ENCODE measurements at regions of chr2 and their contacts with region 1.

Region 1: DNA sequence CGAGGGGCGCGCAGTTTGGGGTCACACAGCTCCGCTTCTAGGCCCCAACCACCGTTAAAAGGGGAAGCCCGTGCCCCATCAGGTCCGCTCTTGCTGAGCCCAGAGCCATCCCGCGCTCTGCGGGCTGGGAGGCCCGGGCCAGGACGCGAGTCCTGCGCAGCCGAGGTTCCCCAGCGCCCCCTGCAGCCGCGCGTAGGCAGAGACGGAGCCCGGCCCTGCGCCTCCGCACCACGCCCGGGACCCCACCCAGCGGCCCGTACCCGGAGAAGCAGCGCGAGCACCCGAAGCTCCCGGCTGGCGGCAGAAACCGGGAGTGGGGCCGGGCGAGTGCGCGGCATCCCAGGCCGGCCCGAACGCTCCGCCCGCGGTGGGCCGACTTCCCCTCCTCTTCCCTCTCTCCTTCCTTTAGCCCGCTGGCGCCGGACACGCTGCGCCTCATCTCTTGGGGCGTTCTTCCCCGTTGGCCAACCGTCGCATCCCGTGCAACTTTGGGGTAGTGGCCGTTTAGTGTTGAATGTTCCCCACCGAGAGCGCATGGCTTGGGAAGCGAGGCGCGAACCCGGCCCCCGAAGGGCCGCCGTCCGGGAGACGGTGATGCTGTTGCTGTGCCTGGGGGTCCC is at the start of gene ITGA4:
- DNase-seq: peak; percentile 83
- CTCF ChIP-seq: peak; percentile 92

Region 2: DNA sequence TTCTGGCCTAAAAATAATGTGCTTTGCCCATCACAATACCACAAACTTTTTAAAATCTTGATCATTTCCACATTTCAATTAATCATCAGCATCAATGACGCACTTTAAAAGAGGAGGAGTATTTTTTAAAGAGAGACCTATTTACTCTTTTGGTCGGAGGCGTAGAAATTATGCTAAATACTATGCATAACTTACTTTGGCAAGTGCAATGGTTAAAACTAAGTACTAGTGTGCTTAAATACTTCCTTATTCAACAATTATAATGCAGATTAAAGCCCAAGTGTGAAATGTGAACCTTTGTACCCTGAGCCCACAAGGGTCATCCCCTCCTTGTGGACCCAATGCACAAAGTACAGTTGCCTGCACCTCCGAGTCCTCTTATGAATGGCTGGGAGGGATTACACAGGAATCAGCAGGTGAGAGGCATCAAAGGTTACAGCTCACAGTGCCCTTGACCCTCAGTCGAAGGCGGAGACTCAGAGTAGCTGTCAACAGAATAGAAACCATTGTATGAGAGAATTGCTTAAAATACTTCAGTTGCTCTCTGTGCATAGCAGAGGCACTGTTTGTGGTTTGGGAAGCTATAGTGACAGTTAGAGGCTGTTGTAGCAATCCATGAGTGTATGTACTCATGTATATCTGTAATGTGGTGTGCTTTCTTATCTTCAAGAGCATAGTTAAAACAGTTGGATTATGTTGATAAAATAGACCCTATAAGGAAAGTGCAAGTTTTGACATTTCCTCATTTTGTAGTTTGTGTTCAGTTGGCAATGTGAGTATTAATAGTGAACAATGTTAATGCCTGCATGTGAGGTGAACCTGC is 151.7 kb before region 1 on chr2:
- CTCF ChIA-PET with region 1: interaction called, 22 read pairs
- POLR2A ChIA-PET with region 1: interaction called, 3 read pairs
- DNase-seq: peak; percentile 45
- CTCF ChIP-seq: no peak

Region 3: DNA sequence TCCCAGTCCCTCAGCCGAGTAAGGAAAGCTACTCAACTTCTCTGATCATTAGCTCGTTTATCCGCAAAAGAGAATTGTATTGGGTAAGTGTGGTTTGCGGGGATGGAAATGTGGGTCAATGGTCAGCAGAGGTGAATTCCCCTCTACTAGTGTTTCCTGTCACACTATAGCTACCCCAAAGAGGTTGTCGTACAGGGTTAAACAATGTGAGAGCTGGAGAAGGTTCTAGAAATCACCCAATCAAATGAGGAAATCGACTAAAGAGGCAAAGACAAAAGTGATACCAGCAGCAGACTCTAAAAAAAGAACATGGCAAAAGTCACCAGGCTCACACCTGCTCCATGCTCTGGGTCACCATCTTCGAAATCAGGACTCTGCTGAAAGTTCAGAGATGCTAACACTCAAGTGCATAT is 144.7 kb before region 1 on chr2:
- CTCF ChIA-PET with region 1: interaction called, 21 read pairs
- POLR2A ChIA-PET with region 1: no interaction called
- DNase-seq: peak; percentile 35
- CTCF ChIP-seq: no peak

Region 4: DNA sequence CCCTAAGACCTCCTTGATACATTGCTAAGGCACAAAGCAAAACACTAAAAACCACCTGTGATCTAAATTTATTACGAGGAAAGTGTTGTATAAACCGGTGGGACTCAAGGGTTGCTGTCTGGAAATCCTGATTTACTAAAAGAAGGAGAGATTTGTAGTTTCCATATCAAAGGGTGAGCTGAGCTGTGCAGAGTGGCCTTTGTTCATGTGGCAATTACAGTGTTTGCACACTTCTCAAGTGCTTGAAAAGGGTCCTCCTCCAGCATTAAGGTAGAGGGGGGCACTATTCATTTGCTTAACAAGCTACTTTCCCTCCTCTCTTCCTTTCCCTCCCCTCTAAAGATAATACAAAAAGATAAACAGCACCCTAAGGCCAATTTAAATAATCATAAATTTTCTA is 30.5 kb before region 1 on chr2:
- CTCF ChIA-PET with region 1: interaction called, 11 read pairs
- POLR2A ChIA-PET with region 1: no interaction called
- DNase-seq: no peak
- CTCF ChIP-seq: no peak

Region 5: DNA sequence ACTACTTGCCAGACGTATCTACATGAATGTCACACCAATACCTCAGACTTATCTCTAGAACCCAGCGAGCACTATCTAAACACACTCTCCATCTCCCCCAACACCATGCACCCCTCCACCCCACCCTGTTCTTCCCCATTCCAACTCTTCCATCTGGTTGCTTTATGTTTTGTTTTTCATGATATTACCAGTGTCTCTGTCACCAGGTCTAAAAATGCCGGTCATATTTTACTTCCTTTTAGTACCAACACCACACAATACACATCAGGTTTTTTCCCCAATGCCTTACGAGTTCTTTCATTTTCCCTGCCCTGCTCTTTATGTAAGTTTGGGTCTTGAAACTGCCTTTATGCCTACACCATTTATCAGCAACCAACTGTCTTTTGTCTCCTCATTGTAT is 10.2 kb before region 1 on chr2:
- CTCF ChIA-PET with region 1: interaction called, 10 read pairs
- POLR2A ChIA-PET with region 1: no interaction called
- DNase-seq: no peak
- CTCF ChIP-seq: no peak

Region 6: DNA sequence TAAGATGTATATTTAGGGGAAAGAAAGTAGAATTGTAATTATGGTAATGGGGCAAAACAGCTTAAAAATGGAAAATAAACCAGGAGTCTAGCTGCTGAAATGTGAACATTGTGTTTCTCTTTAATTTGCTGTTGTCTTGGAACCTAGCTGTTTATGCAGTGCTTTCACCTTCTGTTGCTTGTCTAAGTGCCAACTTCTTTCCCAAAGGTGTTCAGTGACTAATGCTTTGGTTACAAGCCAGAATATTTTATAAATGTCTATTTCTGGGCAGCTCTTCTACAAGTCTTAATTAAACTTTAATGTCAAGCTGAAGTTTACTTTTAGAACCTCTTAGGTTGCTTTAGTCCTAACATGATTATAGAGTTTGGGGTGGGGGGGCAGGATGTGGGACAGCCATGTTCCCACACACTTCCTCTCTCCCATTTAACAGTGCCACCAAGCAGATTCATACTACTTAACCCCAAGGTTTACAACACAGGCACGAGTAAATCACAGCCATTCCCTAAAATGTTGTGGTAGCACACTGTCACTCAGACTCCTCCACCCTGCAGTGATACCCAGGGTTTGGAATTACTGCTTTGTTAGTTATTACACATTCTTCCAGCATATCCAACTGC is 60.6 kb after region 1 on chr2:
- CTCF ChIA-PET with region 1: no interaction called
- POLR2A ChIA-PET with region 1: no interaction called
- DNase-seq: no peak
- CTCF ChIP-seq: no peak